Esophagus squamous epithelium (tissue), 5 donors: ENCODE measurements at regions of chr19 and their contacts with region 1.

Region 1: DNA sequence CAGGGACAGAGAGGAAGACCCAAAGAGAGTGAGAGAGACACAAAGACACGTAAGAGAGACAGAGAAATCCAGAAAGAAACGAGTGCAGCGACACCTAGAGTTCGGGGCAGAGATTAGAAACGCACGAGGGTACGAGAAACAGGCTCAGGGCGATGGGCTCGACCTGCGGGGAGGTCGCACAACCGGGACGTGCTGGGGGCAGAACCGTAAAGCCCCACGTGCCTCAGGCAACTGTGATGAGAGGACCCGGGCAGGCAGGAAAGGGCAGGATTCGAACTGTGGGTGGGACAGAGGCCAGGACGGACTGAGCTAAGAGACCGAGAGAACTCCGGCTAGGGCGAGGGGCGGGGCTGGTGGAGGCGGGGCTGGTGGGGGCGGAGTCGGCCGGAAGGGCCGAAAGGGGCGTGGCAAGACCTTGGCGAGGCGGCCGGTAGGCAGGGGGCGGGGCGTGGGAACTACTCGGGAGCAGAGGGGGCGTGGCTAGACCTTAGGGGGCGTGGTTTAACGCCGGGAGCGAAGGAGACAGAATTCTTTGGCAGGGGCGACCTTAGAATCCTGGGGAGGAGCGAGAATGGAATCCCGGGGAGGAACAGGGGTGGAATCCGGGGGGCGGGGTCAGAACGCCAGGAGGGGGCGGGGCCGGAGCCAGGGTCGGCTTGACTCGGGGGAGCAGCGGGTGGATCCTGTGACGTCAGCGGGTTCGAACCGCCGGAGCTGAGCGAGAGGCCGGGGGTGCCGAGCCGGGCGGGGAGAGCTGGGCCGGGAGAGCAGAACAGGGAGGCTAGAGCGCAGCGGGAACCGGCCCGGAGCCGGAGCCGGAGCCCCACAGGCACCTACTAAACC is at the start of gene NECTIN2:
- DNase-seq: peak; percentile 85
- H3K4me3 ChIP-seq: peak within 1 kb of the TSS; percentile 72 to 100 (median 76)
- H3K27ac ChIP-seq: peak within 1 kb of the TSS; percentile 95 to 99 (median 96)
- H3K4me1 ChIP-seq: peaks cover 21 to 62% (median 27%) of the 10 kb centered on the region in 3 donors
- H3K27me3 ChIP-seq: peaks cover 0 to 3% (median 0%) of the 10 kb centered on the region in 4 donors
- CTCF ChIP-seq: peak; percentile 64 to 87 (median 74)
- POLR2A ChIP-seq: peak in 3 of 4 donors; percentile 88 to 96 (median 89)
- total RNA-seq, gene NECTIN2: 42.9 to 103 (median 60.9) TPM

Region 2: DNA sequence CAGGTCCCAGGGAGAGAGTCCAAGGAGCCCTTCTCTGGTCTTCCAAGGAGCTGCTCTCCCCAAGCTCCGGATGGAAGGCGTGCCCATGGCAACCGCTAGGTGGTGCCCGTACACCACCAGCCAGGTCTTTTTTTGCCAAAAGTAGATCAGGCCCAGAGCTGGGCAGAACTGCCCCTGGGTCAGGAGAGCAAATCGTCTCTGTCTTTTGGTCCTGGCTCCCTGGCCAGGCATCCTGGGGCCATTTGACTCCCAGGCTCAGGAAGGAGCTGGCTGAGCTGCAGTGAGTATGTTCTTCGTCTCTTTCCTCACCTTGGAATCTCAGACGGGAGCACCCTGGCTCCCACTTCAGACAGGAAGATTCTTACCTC is 121.9 kb before region 1 on chr19:
- intact Hi-C with region 1: loop called (anchors 10 kb)
- DNase-seq: no peak
- H3K4me3 ChIP-seq: no peak overlapping the region
- H3K27ac ChIP-seq: peak overlapping the region; percentile 24 to 68 (median 44)
- H3K4me1 ChIP-seq: peaks cover 27 to 60% (median 45%) of the 10 kb centered on the region in 3 donors
- H3K27me3 ChIP-seq: no peaks in the 10 kb centered on the region
- CTCF ChIP-seq: peak; percentile 97 to 99 (median 98)
- POLR2A ChIP-seq: no peak

Region 3: DNA sequence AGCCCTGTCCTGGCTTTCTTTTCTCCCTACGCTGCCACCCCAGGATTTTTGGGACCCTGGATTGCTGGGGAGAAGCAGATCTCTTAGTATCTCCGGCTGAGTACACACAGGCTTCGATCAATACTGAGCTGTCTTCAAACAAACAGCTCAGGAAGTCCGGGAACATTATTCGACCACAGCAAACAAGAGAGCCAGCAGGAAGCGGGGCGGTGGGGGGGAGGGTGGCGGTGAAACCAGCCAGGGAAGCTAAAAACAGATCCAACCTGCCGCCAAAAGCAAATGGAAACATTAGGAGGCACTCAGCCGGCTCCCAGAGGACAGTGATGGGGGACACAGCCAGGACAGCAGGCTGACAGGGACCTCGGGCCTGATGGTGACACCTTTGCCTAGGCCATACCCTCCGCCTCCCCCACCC is 49.1 kb before region 1 on chr19:
- intact Hi-C with region 1: loop called (anchors 5 kb)
- DNase-seq: no peak
- H3K4me3 ChIP-seq: no peak overlapping the region
- H3K27ac ChIP-seq: peak overlapping the region in 3 of 4 donors; percentile 41 to 69 (median 50)
- H3K4me1 ChIP-seq: peaks cover 0 to 7% (median 0%) of the 10 kb centered on the region in 3 donors
- H3K27me3 ChIP-seq: no peaks in the 10 kb centered on the region
- CTCF ChIP-seq: no peak
- POLR2A ChIP-seq: no peak